Naive thymus-derived CD4-positive, alpha-beta T cell (primary cell): ENCODE measurements at regions of chr13 and their contacts with region 1.

Region 1: DNA sequence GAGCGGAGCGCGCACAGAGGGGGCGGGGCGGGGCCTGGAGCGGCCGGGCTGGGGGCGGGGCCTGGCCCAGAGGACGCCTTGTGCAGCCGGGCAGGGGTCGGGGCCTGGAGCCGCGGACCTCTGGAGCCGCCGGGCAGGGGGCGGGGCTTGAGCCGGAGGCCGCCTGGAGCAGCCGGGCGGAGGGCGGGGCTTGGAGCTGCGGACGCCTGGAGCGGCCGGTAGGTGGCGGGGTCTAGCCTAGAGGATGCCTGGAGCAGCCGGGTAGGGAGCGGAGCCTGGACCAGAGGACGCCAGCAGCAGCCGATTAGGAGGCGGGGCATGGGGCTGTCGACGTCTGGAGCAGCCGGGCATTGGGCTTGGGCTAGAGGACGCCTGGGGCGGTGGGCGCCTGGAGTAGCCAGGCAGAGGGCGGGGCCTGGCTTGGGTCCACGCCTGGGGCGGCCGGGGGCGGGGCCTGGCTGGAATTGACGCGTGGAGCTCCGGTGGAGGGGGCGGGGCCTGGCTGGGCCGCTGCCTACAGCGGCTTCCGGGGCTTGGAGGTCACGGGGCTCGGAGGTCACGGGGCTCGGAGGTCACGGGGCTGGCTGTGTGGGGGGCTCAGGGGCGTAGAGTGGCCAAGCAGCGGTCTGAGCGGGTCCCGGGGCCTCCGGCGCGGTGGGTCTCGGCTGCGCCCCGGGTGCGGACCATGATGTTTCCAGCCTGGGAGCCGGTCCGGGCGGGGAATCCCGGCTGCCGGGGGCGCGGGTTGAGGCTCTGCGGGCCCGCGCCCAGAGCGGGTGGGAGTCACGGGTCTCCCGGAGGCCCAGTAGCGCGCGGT is at the start of gene ANKRD10:
- DNase-seq: peak; percentile 82 to 99 (median 89)
- ATAC-seq: peak; percentile 87
- H3K4me3 ChIP-seq: peak within 1 kb of the TSS; percentile 82
- H3K4me3 Mint-ChIP-seq: peak within 1 kb of the TSS; percentile 90 to 97 (median 92)
- H3K27ac ChIP-seq: peak within 1 kb of the TSS; percentile 89
- H3K27ac Mint-ChIP-seq: peak within 1 kb of the TSS; percentile 89 to 97 (median 91)
- H3K4me1 ChIP-seq: peaks cover 22 to 23% of the 10 kb centered on the region in 2 donors
- H3K4me1 Mint-ChIP-seq: peaks cover 25 to 57% (median 44%) of the 10 kb centered on the region in 7 donors
- H3K27me3 ChIP-seq: no peaks in the 10 kb centered on the region
- H3K27me3 Mint-ChIP-seq: no peaks in the 10 kb centered on the region
- total RNA-seq, gene ANKRD10: 129 to 155 (median 132) TPM

Region 2: DNA sequence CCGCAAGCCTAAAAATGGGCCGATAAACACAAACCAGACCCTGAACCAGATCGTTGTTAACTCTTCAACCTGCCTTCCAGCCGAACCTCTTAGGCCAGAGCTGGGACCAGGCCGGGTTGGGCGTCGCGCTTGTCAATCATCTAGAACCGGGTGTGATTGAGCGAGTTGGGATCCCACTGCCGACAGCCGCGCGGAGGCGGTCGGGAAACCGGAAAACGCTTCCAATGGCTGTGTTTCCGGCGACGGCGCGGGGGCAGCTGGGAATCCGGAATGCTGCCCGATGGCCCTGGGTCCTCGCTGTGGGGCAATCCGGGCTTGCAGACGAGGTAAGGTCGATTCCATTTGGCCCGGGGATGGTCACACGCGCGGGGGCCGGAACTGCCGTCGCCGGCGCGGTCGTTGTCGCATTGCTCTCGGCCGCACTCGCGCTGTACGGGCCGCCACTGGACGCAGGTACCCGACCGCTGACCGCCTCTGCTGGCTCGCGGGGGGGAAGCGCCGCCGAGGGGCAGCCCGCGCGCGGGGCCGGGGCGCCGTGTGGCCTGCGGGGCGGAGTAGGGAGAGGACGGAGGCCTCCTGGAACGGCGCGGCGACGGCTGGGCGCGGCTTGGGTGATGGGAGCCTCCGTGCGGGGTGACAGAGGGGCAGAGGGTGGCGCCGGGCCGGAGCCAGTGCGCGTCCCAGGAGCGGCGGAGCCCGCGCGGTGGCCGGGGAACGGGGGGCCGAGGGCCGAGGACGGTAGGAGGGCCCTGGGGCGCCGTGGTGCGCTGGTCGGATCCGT is 299.8 kb before region 1 on chr13 and contains the start of gene NAXD:
- CTCF ChIA-PET with region 1: interaction called, 3 read pairs
- POLR2A ChIA-PET with region 1: no interaction called
- intact Hi-C with region 1: loop called (anchors 1 kb)
- DNase-seq: peak; percentile 44 to 80 (median 76)
- ATAC-seq: peak; percentile 86
- H3K4me3 ChIP-seq: peak within 1 kb of the TSS; percentile 71
- H3K4me3 Mint-ChIP-seq: peak within 1 kb of the TSS; percentile 86 to 97 (median 95)
- H3K27ac ChIP-seq: peak within 1 kb of the TSS; percentile 75
- H3K27ac Mint-ChIP-seq: peak within 1 kb of the TSS; percentile 85 to 96 (median 93)
- H3K4me1 ChIP-seq: peaks cover 9 to 13% of the 10 kb centered on the region in 2 donors
- H3K4me1 Mint-ChIP-seq: peaks cover 19 to 47% (median 38%) of the 10 kb centered on the region in 7 donors
- H3K27me3 ChIP-seq: no peaks in the 10 kb centered on the region
- H3K27me3 Mint-ChIP-seq: peaks cover 0 to 5% (median 0%) of the 10 kb centered on the region in 5 donors
- total RNA-seq, gene NAXD: 17.2 to 34.1 (median 25.9) TPM

Region 3: GRCh38 chr13:110874508-110874960 is 40.7 kb before region 1 on chr13:
- CTCF ChIA-PET with region 1: no interaction called
- POLR2A ChIA-PET with region 1: interaction called, 3 read pairs
- intact Hi-C with region 1: loop called in 1 of 2 experiments (anchors 2 kb)
- DNase-seq: peak in 3 of 9 donors; percentile 10 to 35 (median 13)
- ATAC-seq: peak; percentile 44
- H3K4me3 ChIP-seq: peak overlapping the region; percentile 39
- H3K4me3 Mint-ChIP-seq: peak overlapping the region in 6 of 10 donors; percentile 71 to 90 (median 80)
- H3K27ac ChIP-seq: no peak overlapping the region
- H3K27ac Mint-ChIP-seq: peak overlapping the region in 7 of 9 donors; percentile 13 to 76 (median 66)
- H3K4me1 ChIP-seq: peaks cover 0 to 10% of the 10 kb centered on the region in 2 donors
- H3K4me1 Mint-ChIP-seq: peaks cover 0 to 13% (median 8%) of the 10 kb centered on the region in 7 donors
- H3K27me3 ChIP-seq: peaks cover 0 to 6% of the 10 kb centered on the region in 2 donors
- H3K27me3 Mint-ChIP-seq: peaks cover 15 to 29% (median 22%) of the 10 kb centered on the region in 5 donors

Region 4: GRCh38 chr13:110965038-110965754 is 49.9 kb after region 1 on chr13:
- CTCF ChIA-PET with region 1: no interaction called
- POLR2A ChIA-PET with region 1: no interaction called
- intact Hi-C with region 1: loop called in 1 of 2 experiments (anchors 1 kb)
- DNase-seq: no peak
- ATAC-seq: peak; percentile 26
- H3K4me3 ChIP-seq: no peak overlapping the region
- H3K4me3 Mint-ChIP-seq: peak overlapping the region in 1 of 10 donors; percentile 37
- H3K27ac ChIP-seq: no peak overlapping the region
- H3K27ac Mint-ChIP-seq: peak overlapping the region in 1 of 9 donors; percentile 79
- H3K4me1 ChIP-seq: no peaks in the 10 kb centered on the region
- H3K4me1 Mint-ChIP-seq: peaks cover 0 to 16% (median 0%) of the 10 kb centered on the region in 7 donors
- H3K27me3 ChIP-seq: no peaks in the 10 kb centered on the region
- H3K27me3 Mint-ChIP-seq: peaks cover 0 to 18% (median 8%) of the 10 kb centered on the region in 5 donors

Region 5: GRCh38 chr13:111153279-111153976 is 238.2 kb after region 1 on chr13:
- CTCF ChIA-PET with region 1: no interaction called
- POLR2A ChIA-PET with region 1: no interaction called
- intact Hi-C with region 1: loop called (anchors 1 kb)
- DNase-seq: peak; percentile 87 to 96 (median 93)
- ATAC-seq: peak; percentile 93
- H3K4me3 ChIP-seq: peak overlapping the region; percentile 73
- H3K4me3 Mint-ChIP-seq: peak overlapping the region; percentile 85 to 96 (median 92)
- H3K27ac ChIP-seq: peak overlapping the region; percentile 79
- H3K27ac Mint-ChIP-seq: peak overlapping the region; percentile 88 to 96 (median 90)
- H3K4me1 ChIP-seq: peaks cover 14 to 16% of the 10 kb centered on the region in 2 donors
- H3K4me1 Mint-ChIP-seq: peaks cover 14 to 38% (median 29%) of the 10 kb centered on the region in 7 donors
- H3K27me3 ChIP-seq: no peaks in the 10 kb centered on the region
- H3K27me3 Mint-ChIP-seq: peaks cover 0 to 33% (median 0%) of the 10 kb centered on the region in 5 donors

Region 6: DNA sequence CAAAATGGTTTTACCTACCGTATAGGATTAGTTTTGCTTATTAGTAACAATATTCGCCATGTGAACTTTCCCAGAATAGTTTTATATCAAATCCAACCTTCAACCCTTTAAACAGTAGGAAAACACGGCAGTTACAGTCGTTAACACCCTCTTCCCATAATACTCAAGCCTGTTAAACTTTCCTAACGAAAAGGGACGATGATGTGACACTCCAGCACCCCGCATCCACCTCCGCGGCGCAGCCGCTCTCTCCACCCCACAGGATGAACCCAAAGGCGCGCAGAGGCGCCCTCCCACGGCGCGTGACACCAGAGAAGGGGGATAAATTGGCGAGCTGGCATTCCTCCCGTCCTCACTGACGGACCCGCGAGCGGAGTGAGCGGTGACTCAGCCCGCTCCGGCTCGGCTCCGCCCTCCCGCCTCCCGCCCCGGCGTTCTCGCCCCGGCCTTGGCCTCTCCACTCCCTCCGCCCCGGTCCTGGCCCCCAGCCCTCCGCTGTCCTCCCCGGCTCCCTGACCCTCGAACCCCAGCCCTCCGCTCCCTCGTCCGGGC is 1672.0 kb after region 1 on chr13:
- CTCF ChIA-PET with region 1: no interaction called
- POLR2A ChIA-PET with region 1: no interaction called
- intact Hi-C with region 1: loop called in 1 of 2 experiments (anchors 1 kb)
- DNase-seq: peak; percentile 32 to 82 (median 41)
- ATAC-seq: peak; percentile 69
- H3K4me3 ChIP-seq: peak overlapping the region; percentile 78
- H3K4me3 Mint-ChIP-seq: peak overlapping the region; percentile 86 to 98 (median 94)
- H3K27ac ChIP-seq: peak overlapping the region; percentile 81
- H3K27ac Mint-ChIP-seq: peak overlapping the region; percentile 69 to 94 (median 89)
- H3K4me1 ChIP-seq: peaks cover 18 to 20% of the 10 kb centered on the region in 2 donors
- H3K4me1 Mint-ChIP-seq: peaks cover 37 to 58% (median 43%) of the 10 kb centered on the region in 7 donors
- H3K27me3 ChIP-seq: no peaks in the 10 kb centered on the region
- H3K27me3 Mint-ChIP-seq: no peaks in the 10 kb centered on the region